HEK293T (cell line): ENCODE measurements at regions of chr6 and their contacts with region 1.

Region 1: DNA sequence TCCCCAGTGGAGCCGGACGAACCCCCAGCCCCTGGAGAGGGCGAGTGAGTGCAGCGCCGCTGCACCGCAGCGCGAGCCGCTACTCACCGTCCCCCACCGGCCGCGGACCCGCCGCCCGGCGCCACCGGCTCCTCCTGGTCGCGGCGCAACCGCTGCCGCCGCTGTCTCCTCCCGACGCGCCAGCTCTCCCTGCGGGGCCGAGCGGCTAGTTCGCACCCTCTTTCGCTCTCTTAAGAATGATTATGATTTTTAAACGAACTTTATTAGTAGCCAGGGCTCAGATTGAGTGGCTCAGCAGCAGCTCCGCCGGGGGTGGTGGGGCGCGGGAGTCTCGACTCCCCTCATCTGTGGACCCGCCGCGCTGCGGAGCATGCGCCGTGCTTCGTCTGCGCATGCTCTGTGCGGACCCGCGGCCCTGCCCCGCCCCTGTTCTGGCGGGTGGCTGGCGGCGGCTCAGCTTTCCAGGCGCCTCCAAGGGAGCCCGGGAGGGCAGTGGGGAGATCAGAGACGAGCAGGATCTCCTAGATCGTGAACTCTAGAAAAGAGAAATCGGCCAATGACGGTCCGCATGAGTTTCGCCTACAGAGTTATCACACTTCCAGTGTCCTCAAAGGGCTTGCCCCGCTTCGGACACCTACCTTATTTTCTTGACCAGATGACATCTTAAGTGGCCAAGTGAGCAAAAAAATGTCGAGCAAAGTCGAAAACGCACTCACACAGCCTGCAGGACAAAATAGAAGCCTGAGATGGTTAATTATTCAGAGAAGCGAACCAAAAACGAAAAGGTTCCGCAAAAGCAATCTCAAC is at the start of gene RAB23:
- DNase-seq: peak; percentile 91

Region 2: DNA sequence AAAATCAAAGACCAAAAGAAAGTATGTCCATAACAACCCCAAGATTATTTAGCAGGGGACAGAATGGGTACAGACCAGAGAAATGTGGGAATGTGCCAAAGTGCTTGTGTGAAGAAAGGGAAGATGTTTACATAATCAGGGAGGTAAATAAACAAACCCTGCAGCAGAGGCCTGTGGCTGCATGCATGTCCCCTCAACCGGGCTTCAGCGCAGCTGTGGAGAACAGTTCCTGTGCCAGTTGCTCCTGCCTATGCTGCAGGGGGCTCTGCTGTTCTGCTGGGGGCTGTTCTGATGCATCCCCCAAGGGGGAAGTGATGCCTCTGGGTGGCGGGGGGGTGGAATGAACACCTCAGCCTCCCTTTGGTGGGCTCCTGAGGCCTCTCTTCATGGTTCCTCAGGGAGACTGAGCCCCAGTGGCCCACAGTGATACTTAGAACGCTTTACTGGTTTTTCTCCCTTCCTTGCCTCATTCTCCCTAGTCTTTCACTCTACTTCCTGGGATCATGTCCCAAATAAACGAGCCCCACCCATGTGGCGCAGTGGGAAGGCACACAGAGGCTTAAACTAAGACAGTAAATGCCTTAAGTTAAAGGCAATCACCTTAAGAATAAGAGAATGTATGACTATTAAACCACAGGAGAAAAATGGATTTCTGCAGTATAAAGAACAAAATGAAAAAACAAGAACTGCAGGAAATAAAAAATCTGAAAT is 23.1 kb before region 1 on chr6:
- CTCF ChIA-PET with region 1: no interaction called
- POLR2A ChIA-PET with region 1: interaction called, 11 read pairs
- DNase-seq: no peak

Region 3: DNA sequence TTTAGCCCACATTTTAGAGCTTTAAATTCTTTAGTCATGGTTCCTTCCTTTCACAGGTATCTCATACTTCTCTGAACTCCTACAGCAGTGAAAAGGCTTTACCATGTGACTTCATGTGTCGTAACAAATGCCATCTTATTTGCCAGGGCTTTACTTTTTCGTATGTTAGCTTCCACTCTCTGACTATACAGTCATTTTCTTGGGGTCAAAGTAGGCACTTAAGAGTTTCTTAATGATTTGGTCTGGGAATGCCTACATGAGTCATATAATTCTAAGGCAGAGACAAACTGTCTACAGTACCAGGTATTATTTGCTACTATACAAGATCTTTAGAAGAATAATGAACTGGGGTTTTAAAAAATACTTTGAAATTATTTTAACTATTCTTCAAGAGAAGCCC is 15.0 kb before region 1 on chr6:
- CTCF ChIA-PET with region 1: interaction called, 3 read pairs
- POLR2A ChIA-PET with region 1: interaction called, 13 read pairs
- DNase-seq: no peak

Region 4: DNA sequence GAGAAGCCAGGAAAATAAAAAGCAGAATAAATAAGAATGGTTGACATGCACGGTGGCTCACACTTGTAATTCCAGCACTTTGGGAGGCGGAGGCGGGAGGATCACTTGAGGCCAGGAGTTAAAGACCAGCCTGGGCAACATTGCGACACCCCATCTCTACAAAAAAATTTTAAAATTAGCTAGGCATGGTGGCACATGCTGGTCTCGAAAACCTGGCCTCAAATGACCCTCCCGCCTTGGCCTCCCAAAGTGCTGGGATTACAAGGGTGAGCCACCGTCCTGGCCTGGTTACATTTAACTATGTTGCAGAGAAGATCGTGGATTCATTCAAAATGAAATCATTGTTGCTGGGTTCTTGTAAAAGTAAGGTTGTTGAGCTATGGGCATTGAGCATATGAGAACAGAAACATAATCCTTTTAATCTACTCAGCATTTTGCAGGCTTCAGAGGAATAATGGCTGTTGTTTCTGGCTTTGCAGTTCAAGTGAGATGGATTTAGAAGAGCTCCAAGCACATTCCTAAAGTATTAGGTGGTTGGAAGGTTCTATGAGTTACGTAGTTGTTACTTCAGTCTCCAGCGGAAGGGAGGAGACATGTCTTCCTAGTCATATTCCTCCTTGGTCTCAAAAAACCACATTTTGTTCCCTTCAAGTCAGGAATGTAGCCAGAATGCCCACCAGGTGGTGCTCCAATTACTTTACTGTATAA is 45.6 kb after region 1 on chr6:
- CTCF ChIA-PET with region 1: no interaction called
- POLR2A ChIA-PET with region 1: interaction called, 13 read pairs
- DNase-seq: peak; percentile 48